ENCODE measurements at regions of chr13 and their contacts with region 1.

Region 1: GRCh38 chr13:110944121-110944967 is 29.5 kb upstream of the ANKRD10 start:
- DNase-seq: no peak
- H3K4me3 Mint-ChIP-seq: no peak overlapping the region
- H3K27ac Mint-ChIP-seq: no peak overlapping the region
- H3K4me1 Mint-ChIP-seq: peaks cover 32% of the 10 kb centered on the region
- H3K27me3 Mint-ChIP-seq: no peaks in the 10 kb centered on the region

Region 2: GRCh38 chr13:110265682-110266430 is 678.5 kb before region 1 on chr13:
- intact Hi-C with region 1: no loop called
- DNase-seq: no peak
- H3K4me3 Mint-ChIP-seq: no peak overlapping the region
- H3K27ac Mint-ChIP-seq: no peak overlapping the region
- H3K4me1 Mint-ChIP-seq: no peaks in the 10 kb centered on the region
- H3K27me3 Mint-ChIP-seq: peaks cover 9% of the 10 kb centered on the region

Region 3: GRCh38 chr13:110799246-110800236 is 144.8 kb before region 1 on chr13:
- intact Hi-C with region 1: no loop called
- DNase-seq: no peak
- H3K4me3 Mint-ChIP-seq: no peak overlapping the region
- H3K27ac Mint-ChIP-seq: no peak overlapping the region
- H3K4me1 Mint-ChIP-seq: peaks cover 3% of the 10 kb centered on the region
- H3K27me3 Mint-ChIP-seq: peaks cover 46% of the 10 kb centered on the region

Region 4: DNA sequence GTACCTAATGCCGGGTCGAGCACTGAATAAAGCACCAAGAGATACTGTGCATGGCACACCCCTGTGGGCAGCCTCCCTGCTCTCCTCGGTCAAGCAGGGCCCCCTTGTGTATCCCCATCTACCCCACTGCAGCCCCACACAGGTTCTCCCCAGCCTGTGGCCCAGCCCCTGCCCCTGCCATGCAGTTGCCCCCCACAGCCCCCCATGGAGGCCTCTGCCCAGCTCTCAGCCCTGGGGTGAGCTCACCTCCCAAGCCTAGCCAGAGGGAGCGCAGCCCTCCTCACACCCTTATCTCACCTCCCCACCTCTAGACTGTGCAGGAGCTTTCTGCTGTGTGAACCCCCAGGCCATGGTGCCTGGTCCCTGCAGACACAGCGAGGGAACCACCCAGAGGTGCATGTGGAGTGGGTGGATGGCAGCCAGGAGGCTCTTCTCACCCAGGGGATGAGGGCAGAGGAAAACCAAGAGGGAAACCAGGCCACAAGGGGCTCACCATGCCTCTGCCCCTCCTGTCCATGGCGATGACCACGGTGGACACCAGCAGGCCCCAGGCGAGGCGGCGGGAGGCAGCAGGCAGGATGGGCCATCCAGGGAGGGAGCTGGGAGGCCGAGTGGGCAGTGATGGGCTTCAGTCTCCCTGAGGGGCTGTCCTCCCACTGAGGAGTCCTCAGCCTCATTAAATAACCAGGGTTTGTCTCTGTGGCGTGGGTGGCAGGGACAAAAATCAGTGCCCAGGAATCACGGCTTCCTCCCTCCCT is 112.7 kb before region 1 on chr13:
- intact Hi-C with region 1: no loop called
- DNase-seq: no peak
- H3K4me3 Mint-ChIP-seq: no peak overlapping the region
- H3K27ac Mint-ChIP-seq: no peak overlapping the region
- H3K4me1 Mint-ChIP-seq: no peaks in the 10 kb centered on the region
- H3K27me3 Mint-ChIP-seq: peaks cover 15% of the 10 kb centered on the region

Region 5: GRCh38 chr13:110965038-110965754 is 20.9 kb after region 1 on chr13:
- intact Hi-C with region 1: loop called (anchors 1 kb)
- DNase-seq: peak; percentile 46
- H3K4me3 Mint-ChIP-seq: peak overlapping the region; percentile 26
- H3K27ac Mint-ChIP-seq: peak overlapping the region; percentile 83
- H3K4me1 Mint-ChIP-seq: peaks cover 21% of the 10 kb centered on the region
- H3K27me3 Mint-ChIP-seq: no peaks in the 10 kb centered on the region

Region 6: GRCh38 chr13:110993788-110994187 is 49.4 kb after region 1 on chr13:
- intact Hi-C with region 1: no loop called
- DNase-seq: no peak
- H3K4me3 Mint-ChIP-seq: no peak overlapping the region
- H3K27ac Mint-ChIP-seq: no peak overlapping the region
- H3K4me1 Mint-ChIP-seq: no peaks in the 10 kb centered on the region
- H3K27me3 Mint-ChIP-seq: peaks cover 51% of the 10 kb centered on the region

Region 7: DNA sequence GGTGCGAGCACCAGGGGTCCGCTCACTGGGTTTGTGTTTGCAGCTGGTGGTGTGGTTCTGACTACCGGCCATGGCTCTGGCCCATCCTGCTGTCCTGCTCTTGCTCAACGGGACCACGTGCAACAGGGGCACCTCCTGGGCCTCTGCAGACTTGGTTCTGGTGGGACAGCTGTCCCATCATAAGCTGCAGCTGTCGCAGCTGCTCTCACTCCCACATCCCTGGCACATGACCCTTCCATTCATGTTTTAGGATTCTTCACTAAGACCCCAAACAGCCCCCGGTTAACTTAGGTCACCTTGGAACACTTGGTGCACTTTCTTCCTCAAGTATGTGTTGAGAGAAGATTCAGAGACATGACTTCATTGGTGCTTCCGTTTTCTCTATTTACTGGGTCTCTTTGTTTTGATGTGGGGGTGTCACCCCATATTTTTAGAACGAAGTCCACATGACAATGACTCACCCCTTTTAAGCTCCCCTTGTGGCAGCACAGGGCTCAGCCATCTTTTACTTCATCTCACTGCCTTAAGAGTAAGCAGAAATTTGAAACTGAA is 102.3 kb after region 1 on chr13:
- intact Hi-C with region 1: loop called (anchors 1 kb)
- DNase-seq: no peak
- H3K4me3 Mint-ChIP-seq: no peak overlapping the region
- H3K27ac Mint-ChIP-seq: no peak overlapping the region
- H3K4me1 Mint-ChIP-seq: peaks cover 6% of the 10 kb centered on the region
- H3K27me3 Mint-ChIP-seq: peaks cover 7% of the 10 kb centered on the region

Region 8: DNA sequence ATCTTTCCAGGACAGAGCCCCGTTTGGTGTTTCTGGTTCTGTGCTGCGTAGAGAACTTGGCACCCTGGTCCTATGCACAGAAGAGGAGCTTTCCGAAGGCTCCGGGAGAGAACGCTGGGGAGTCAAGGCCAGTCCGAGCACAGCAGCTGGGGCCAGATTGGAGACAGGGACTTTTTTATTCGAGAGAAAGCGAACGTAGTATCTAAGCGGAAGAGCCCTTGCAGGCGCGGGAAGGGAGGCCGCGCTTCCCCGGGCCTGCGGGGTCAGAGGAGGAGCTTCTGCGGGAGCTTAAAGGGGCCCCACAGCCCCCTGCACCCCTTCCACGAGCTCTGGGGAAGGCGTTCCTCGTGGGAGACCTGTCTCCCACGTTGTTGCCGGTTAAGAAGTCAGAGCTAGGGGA is 122.2 kb after region 1 on chr13:
- intact Hi-C with region 1: loop called (anchors 5 kb)
- DNase-seq: no peak
- H3K4me3 Mint-ChIP-seq: peak overlapping the region; percentile 60
- H3K27ac Mint-ChIP-seq: no peak overlapping the region
- H3K4me1 Mint-ChIP-seq: peaks cover 8% of the 10 kb centered on the region
- H3K27me3 Mint-ChIP-seq: peaks cover 58% of the 10 kb centered on the region

Region 9: DNA sequence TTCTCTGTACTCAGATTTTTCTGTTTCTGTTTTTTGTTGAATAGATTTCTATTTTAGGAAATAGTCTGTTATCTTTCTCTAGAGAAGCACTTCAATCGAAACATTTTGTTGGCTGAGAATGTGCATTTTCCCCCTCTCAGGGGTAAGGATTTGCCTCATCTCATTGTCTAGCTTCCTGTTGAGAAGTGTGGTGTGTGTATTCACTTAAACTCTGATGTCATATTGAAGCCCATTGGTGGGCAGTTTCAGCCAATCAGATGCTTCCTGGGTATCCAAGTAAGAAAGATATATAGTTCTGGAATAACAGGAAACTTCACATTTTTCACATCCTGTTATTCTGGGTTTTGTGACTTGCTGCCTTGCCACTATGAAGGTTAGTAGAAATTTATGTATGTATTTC is 258.4 kb after region 1 on chr13:
- intact Hi-C with region 1: loop called (anchors 10 kb)
- DNase-seq: no peak
- H3K4me3 Mint-ChIP-seq: no peak overlapping the region
- H3K27ac Mint-ChIP-seq: peak overlapping the region; percentile 40
- H3K4me1 Mint-ChIP-seq: peaks cover 54% of the 10 kb centered on the region
- H3K27me3 Mint-ChIP-seq: no peaks in the 10 kb centered on the region

Measured in activated T-helper 2 cell treated with anti-CD3 and anti-CD28 coated beads, Interferon-gamma antibody, Interleukin-2, Interleukin-4, amounts not matched to agents 10 μg/mL and 5 μg/mL and 100 μg/mL, durations not matched to agents 14 hours and 24 hours and 36 hours (primary cell).